HCT116 (cell line): ENCODE measurements at regions of chr10 and their contacts with region 1.

Region 1: GRCh38 chr10:101050208-101051069 is 11.3 kb upstream of the KAZALD1 start:
- DNase-seq: no peak
- ATAC-seq: peak; percentile 90
- H3K4me3 ChIP-seq: peak overlapping the region in 1 of 2 experiments; percentile 38; a peak in 3 of 4 replicates
- H3K27ac ChIP-seq: no peak overlapping the region; the same call in 1 of the 2 replicates
- H3K4me1 ChIP-seq: peaks cover 18 to 36% of the 10 kb centered on the region in 2 experiments
- H3K27me3 ChIP-seq: no peaks in the 10 kb centered on the region
- CTCF ChIP-seq: peak in 2 of 3 experiments; percentile 98; a peak in 4 of 6 replicates
- POLR2A ChIP-seq: no peak
- RAD21 ChIP-seq: no peak

Region 2: GRCh38 chr10:100827819-100828737 is 222.4 kb before region 1 on chr10:
- CTCF ChIA-PET with region 1: no interaction called
- POLR2A ChIA-PET with region 1: no interaction called
- RAD21 ChIA-PET with region 1: no interaction called
- intact Hi-C with region 1: no loop called
- DNase-seq: no peak
- ATAC-seq: peak; percentile 66
- H3K4me3 ChIP-seq: peak overlapping the region; percentile 51 to 70
- H3K27ac ChIP-seq: peak overlapping the region; percentile 54; the same call in 1 of the 2 replicates
- H3K4me1 ChIP-seq: peaks cover 12 to 30% of the 10 kb centered on the region in 2 experiments; a peak in 3 of 4 replicates
- H3K27me3 ChIP-seq: peaks cover 6% of the 10 kb centered on the region; the same call in 1 of the 2 replicates
- CTCF ChIP-seq: peak in 1 of 3 experiments; percentile 17; a peak in 1 of 6 replicates
- POLR2A ChIP-seq: no peak
- RAD21 ChIP-seq: no peak; the same call in 1 of the 2 replicates

Region 3: DNA sequence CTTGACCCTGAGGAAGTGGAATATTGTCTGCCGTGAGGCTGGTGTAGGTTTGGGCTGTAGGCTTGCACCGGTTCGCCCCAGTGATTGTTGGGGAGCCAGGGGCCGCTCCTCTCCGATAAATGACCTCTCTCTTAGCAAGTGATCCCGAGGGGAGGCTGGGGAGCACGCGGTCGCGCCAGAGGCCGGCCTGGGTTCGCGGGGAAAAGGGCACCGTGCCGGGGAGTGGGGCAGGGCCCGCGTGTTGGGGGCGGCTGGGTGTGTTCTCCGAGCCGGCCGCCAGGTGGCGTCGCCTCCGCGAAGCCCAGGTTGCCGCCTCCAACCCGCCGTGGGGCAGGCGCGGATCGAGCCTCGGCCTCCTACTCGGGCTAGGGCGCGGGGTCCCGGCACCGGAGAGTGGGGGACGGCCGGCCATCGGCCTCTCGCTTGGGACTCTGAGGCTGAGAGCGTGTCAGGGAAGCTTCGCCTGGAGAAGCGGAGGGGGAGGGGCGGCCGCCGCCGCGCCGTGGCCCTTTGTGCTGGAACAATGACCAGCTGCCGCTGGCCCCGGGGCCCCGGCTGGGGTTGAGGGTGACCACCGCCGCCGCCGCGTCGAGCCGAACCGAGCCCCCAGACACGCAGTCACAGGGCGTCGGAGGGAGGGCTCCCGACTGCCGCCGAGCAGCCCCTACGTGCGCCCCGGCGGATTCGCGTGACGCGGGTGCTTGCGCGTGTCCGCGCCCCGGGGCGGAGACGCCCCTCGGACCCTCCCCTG is 51.3 kb before region 1 on chr10:
- CTCF ChIA-PET with region 1: interaction called, 17 read pairs
- POLR2A ChIA-PET with region 1: no interaction called
- RAD21 ChIA-PET with region 1: no interaction called
- intact Hi-C with region 1: no loop called
- DNase-seq: no peak
- ATAC-seq: peak; percentile 51
- H3K4me3 ChIP-seq: peak overlapping the region; percentile 88 to 92
- H3K27ac ChIP-seq: peak overlapping the region; percentile 87
- H3K4me1 ChIP-seq: peaks cover 21 to 55% of the 10 kb centered on the region in 2 experiments
- H3K27me3 ChIP-seq: no peaks in the 10 kb centered on the region
- CTCF ChIP-seq: peak in 2 of 3 experiments; percentile 93 to 96; a peak in 4 of 6 replicates
- POLR2A ChIP-seq: no peak
- RAD21 ChIP-seq: no peak

Region 4: DNA sequence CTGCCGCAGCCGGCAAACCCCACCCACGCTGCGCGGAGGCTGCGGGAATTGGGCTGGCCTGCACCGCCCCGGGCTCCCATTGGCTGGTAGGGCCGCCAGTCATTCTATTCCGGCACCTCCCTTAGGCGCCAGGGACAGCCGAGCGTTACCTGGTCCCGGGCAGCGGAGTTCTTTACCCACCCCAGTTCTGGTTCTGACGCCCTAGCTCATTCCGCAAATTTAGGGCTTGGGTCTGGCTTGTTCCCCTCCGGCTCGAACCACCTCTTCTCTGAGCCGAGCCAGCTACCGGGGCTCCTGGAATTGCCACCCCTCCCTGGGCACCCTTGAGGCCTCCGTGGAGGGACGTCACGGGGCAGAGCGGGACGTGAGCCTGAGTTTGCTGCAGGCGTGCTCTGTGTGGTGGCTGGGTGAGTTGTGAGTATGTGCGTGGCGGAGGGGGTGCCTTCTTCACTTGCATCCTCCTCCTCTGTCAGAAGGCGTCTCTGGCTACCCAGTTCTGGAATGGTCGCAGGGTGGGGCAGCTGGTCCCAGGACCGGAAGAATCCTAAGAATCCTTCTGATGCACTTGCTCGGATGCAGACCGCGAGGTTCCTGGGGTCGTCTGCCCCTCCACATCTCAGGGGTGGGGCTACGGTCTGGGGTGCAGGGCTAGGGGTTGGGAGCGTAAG is 19.2 kb before region 1 on chr10 and contains the starts of genes PDZD7 and SFXN3:
- CTCF ChIA-PET with region 1: interaction called, 13 read pairs
- POLR2A ChIA-PET with region 1: interaction called, 3 read pairs
- RAD21 ChIA-PET with region 1: no interaction called
- intact Hi-C with region 1: no loop called
- DNase-seq: peak; percentile 94
- ATAC-seq: peak; percentile 87
- H3K4me3 ChIP-seq: peak within 1 kb of the TSS; percentile 67 to 87
- H3K27ac ChIP-seq: peak within 1 kb of the TSS; percentile 81
- H3K4me1 ChIP-seq: peaks cover 32 to 56% of the 10 kb centered on the region in 2 experiments
- H3K27me3 ChIP-seq: no peaks in the 10 kb centered on the region
- CTCF ChIP-seq: no peak
- POLR2A ChIP-seq: no peak
- RAD21 ChIP-seq: no peak
- total RNA-seq, gene PDZD7: 6.1 TPM
- total RNA-seq, gene SFXN3: 52.5 TPM

Region 5: GRCh38 chr10:101067356-101068083 is 17.1 kb after region 1 on chr10:
- CTCF ChIA-PET with region 1: interaction called, 109 read pairs
- POLR2A ChIA-PET with region 1: interaction called, 9 read pairs
- RAD21 ChIA-PET with region 1: interaction called, 3 to 7 read pairs
- intact Hi-C with region 1: no loop called
- DNase-seq: peak; percentile 91
- ATAC-seq: peak; percentile 39
- H3K4me3 ChIP-seq: peak overlapping the region; percentile 66 to 71
- H3K27ac ChIP-seq: peak overlapping the region; percentile 93
- H3K4me1 ChIP-seq: peaks cover 37 to 79% of the 10 kb centered on the region in 2 experiments
- H3K27me3 ChIP-seq: no peaks in the 10 kb centered on the region
- CTCF ChIP-seq: peak in 2 of 3 experiments; percentile 89 to 94; a peak in 4 of 6 replicates
- POLR2A ChIP-seq: no peak
- RAD21 ChIP-seq: no peak

Region 6: GRCh38 chr10:101075775-101076174 is 25.3 kb after region 1 on chr10:
- CTCF ChIA-PET with region 1: interaction called, 91 read pairs
- POLR2A ChIA-PET with region 1: no interaction called
- RAD21 ChIA-PET with region 1: no interaction called
- intact Hi-C with region 1: no loop called
- DNase-seq: no peak
- ATAC-seq: 0 out of 2 replicates have a peak, but pooled peaks have one; percentile 16
- H3K4me3 ChIP-seq: no peak overlapping the region
- H3K27ac ChIP-seq: no peak overlapping the region
- H3K4me1 ChIP-seq: peaks cover 0 to 12% of the 10 kb centered on the region in 2 experiments; a peak in 2 of 4 replicates
- H3K27me3 ChIP-seq: peaks cover 24% of the 10 kb centered on the region
- CTCF ChIP-seq: no peak
- POLR2A ChIP-seq: no peak
- RAD21 ChIP-seq: no peak